ENCODE measurements at regions of chr9 and their contacts with region 1.

Region 1: GRCh38 chr9:137423004-137423874 is at the starts of genes EXD3 and NOXA1:
- DNase-seq: peak; percentile 55 to 96
- ATAC-seq: peak; percentile 84 to 90
- H3K4me3 ChIP-seq: peak within 1 kb of the TSS; percentile 94
- H3K27ac ChIP-seq: peak within 1 kb of the TSS; percentile 90 to 94
- H3K4me1 ChIP-seq: peaks cover 15% of the 10 kb centered on the region; the same call in 2 of the 3 replicates
- CTCF ChIP-seq: peak; percentile 97
- EP300 ChIP-seq: 0 out of 5 replicates have a peak, but pooled peaks of 1 of the 2 experiments have one; percentile 19
- POLR2A ChIP-seq: peak; percentile 36; the same call in 1 of the 2 replicates
- RAD21 ChIP-seq: peak; percentile 38 to 72; a peak in 4 of 5 replicates
- polyA plus RNA-seq, gene EXD3: 3.3 and 3.4 TPM in 2 replicates
- polyA plus RNA-seq, gene NOXA1: 0.44 and 0.58 TPM in 2 replicates

Region 2: DNA sequence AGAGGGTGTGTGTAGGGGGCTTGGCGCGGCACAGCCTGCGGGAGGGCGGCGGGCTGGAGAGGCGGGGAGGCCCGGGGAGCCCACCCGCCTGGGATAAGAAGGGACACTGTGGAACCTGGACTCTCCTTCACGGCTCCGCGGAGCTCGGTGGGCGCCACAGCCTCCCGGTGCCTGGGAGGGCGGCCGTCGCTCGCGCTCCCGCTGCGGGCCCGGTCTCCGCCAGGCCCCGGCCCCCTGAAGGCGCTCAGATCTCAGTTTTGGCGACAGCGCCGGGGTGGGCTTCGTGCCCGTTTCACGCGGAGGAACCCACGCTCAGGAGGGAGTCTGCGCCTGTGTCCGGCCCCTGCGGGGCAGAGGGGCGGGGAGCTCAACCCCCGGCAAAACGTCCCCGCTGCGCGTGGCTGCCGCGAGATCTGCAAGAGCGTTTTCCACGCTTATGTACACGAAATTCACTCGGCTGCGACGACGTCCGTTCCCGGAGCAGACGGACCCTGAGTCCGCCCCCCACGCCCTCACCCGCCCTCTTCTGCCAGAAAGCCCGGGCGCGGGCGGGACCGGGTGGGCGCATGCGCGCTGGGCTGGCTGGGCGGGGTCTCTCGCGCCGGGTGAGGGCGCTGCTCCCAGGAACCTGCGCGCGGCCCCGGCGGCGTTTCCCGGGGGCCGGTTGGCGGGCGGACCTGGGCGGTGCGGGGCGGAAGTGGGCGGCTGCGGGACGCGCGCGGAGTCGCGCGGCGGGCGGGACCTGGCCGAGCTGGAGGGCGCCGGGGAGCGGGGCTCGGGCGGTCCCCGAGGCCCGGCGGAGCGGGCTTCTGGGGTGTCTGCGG is 168.4 kb before region 1 on chr9 and contains the start of gene NELFB:
- CTCF ChIA-PET with region 1: no interaction called
- POLR2A ChIA-PET with region 1: no interaction called
- DNase-seq: peak; percentile 83 to 98
- ATAC-seq: peak; percentile 71 to 83
- H3K4me3 ChIP-seq: peak within 1 kb of the TSS; percentile 93
- H3K27ac ChIP-seq: peak within 1 kb of the TSS; percentile 90 to 98
- H3K4me1 ChIP-seq: peaks cover 20% of the 10 kb centered on the region
- CTCF ChIP-seq: no peak
- EP300 ChIP-seq: 0 out of 5 replicates have a peak, but pooled peaks of 1 of the 2 experiments have one; percentile 36
- POLR2A ChIP-seq: peak; percentile 90
- RAD21 ChIP-seq: no peak
- polyA plus RNA-seq, gene NELFB: 31.8 and 33.8 TPM in 2 replicates

Region 3: DNA sequence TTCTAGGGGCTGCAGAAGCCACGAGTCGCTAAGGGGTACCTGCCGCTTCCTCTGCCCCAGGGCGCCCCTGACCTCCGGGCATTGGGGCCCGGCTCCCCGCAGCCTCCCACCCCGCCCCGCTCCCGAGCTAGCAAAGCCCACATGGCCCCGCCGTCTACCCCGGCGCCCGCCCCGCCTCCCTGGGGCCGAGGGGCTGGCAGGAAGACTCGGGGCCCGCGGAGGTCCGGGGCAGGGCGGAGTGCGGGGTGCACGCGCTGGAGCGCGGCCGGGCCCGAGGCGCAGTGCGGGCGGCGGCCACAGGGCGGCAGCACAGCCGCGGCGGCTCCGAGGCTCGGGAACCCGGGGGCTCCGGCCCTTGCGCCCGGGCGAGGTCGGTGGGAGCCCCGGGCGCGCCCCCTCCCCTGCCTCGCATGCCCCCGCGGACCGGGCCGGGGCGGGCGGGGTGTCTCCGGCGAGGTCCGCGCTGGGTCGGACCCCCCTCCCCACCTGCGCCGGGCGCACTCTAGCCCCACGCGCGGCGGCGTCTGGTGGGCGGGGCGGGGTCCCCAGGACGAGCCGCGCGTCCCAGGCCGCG is 127.9 kb before region 1 on chr9:
- CTCF ChIA-PET with region 1: interaction called, 21 read pairs
- POLR2A ChIA-PET with region 1: no interaction called
- DNase-seq: peak in 1 of 2 experiments; percentile 84
- ATAC-seq: peak; percentile 71 to 79
- H3K4me3 ChIP-seq: peak overlapping the region; percentile 88
- H3K27ac ChIP-seq: peak overlapping the region; percentile 85 to 93
- H3K4me1 ChIP-seq: peaks cover 26% of the 10 kb centered on the region
- CTCF ChIP-seq: peak; percentile 91
- EP300 ChIP-seq: no peak
- POLR2A ChIP-seq: no peak
- RAD21 ChIP-seq: peak; percentile 42 to 66

Region 4: DNA sequence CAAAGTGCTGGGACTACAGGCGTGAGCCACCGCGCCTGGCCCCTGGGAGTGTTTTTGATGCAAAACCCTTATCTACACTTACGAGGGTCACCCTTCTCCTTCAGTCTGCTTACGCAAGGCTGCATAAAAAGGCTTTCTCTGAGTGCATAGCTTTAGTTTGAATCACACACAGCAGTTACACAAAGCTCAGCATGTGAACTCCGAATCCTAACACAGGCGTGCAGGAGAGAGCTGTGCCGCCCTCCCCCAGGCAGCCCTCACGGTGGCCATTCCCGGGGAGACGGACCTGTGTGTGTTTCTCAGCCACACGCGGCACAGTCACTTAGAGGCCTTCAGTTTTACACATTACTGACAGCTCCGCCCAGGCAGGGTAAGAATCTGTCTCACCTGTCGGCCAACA is 27.0 kb before region 1 on chr9:
- CTCF ChIA-PET with region 1: interaction called, 12 read pairs
- POLR2A ChIA-PET with region 1: no interaction called
- DNase-seq: peak; percentile 31 to 71
- ATAC-seq: peak; percentile 80 to 87
- H3K4me3 ChIP-seq: no peak overlapping the region
- H3K27ac ChIP-seq: peak overlapping the region in 1 of 2 experiments; percentile 70; a peak in 3 of 6 replicates
- H3K4me1 ChIP-seq: peaks cover 7% of the 10 kb centered on the region
- CTCF ChIP-seq: no peak
- EP300 ChIP-seq: no peak
- POLR2A ChIP-seq: no peak
- RAD21 ChIP-seq: no peak

Region 5: GRCh38 chr9:137435980-137436760 is 12.9 kb after region 1 on chr9:
- CTCF ChIA-PET with region 1: interaction called, 98 read pairs
- POLR2A ChIA-PET with region 1: interaction called, 6 read pairs
- DNase-seq: peak; percentile 77 to 96
- ATAC-seq: peak; percentile 79 to 89
- H3K4me3 ChIP-seq: no peak overlapping the region
- H3K27ac ChIP-seq: peak overlapping the region; percentile 69 to 76
- H3K4me1 ChIP-seq: peaks cover 13% of the 10 kb centered on the region
- CTCF ChIP-seq: no peak
- EP300 ChIP-seq: no peak
- POLR2A ChIP-seq: no peak
- RAD21 ChIP-seq: no peak

Region 6: GRCh38 chr9:137453643-137454081 is 30.4 kb after region 1 on chr9:
- CTCF ChIA-PET with region 1: interaction called, 14 read pairs
- POLR2A ChIA-PET with region 1: no interaction called
- DNase-seq: peak; percentile 43 to 57
- ATAC-seq: peak in 1 of 2 experiments; percentile 62; a peak in 3 of 6 replicates
- H3K4me3 ChIP-seq: no peak overlapping the region
- H3K27ac ChIP-seq: no peak overlapping the region
- H3K4me1 ChIP-seq: peaks cover 33% of the 10 kb centered on the region
- CTCF ChIP-seq: no peak
- EP300 ChIP-seq: no peak
- POLR2A ChIP-seq: no peak
- RAD21 ChIP-seq: no peak